Endothelial cell of umbilical vein (primary cell): ENCODE measurements at regions of chr2 and their contacts with region 1.

Region 1: GRCh38 chr2:74421221-74421870 is at the starts of genes C2orf81 and WDR54:
- DNase-seq: peak; percentile 86
- H3K4me3 ChIP-seq: peak within 1 kb of the TSS; percentile 43 to 73 (median 66)
- H3K27ac ChIP-seq: no peak within 1 kb of the TSS
- H3K4me1 ChIP-seq: peaks cover 9% of the 10 kb centered on the region
- H3K27me3 ChIP-seq: peaks cover 7 to 14% of the 10 kb centered on the region in 2 experiments
- CTCF ChIP-seq: no peak
- POLR2A ChIP-seq: no peak
- total RNA-seq, gene C2orf81: 0.51 and 0.71 TPM in 2 replicates
- total RNA-seq, gene WDR54: 21.7 and 24.9 TPM in 2 replicates

Region 2: GRCh38 chr2:74440378-74441169 is 19.2 kb after region 1 on chr2:
- CTCF ChIA-PET with region 1: no interaction called
- POLR2A ChIA-PET with region 1: interaction called, 3 read pairs
- dilution Hi-C with region 1: no loop called
- intact Hi-C with region 1: loop called (anchors 1 kb)
- DNase-seq: peak; percentile 89
- H3K4me3 ChIP-seq: peak overlapping the region in 2 of 3 experiments; percentile 47 to 56
- H3K27ac ChIP-seq: no peak overlapping the region
- H3K4me1 ChIP-seq: peaks cover 27% of the 10 kb centered on the region
- H3K27me3 ChIP-seq: peaks cover 18 to 32% of the 10 kb centered on the region in 2 experiments
- CTCF ChIP-seq: peak; percentile 5 to 41
- POLR2A ChIP-seq: peak; percentile 58

Region 3: GRCh38 chr2:74685408-74685807 is 264.1 kb after region 1 on chr2:
- CTCF ChIA-PET with region 1: no interaction called
- POLR2A ChIA-PET with region 1: no interaction called
- dilution Hi-C with region 1: no loop called
- intact Hi-C with region 1: no loop called
- DNase-seq: no peak
- H3K4me3 ChIP-seq: no peak overlapping the region
- H3K27ac ChIP-seq: no peak overlapping the region
- H3K4me1 ChIP-seq: no peaks in the 10 kb centered on the region
- H3K27me3 ChIP-seq: peaks cover 9 to 18% of the 10 kb centered on the region in 2 experiments
- CTCF ChIP-seq: no peak
- POLR2A ChIP-seq: no peak